IMR-90 (cell line): ENCODE measurements at regions of chr17 and their contacts with region 1.

Region 1: GRCh38 chr17:4143563-4144421 is 795 bp downstream of the CYB5D2 start:
- DNase-seq: peak; percentile 92
- ATAC-seq: peak; percentile 73
- H3K4me3 ChIP-seq: peak overlapping the region; percentile 87
- H3K27ac ChIP-seq: peak overlapping the region; percentile 96
- H3K4me1 ChIP-seq: peaks cover 4% of the 10 kb centered on the region
- H3K27me3 ChIP-seq: no peaks in the 10 kb centered on the region
- CTCF ChIP-seq: no peak
- POLR2A ChIP-seq: peak; percentile 88
- RAD21 ChIP-seq: no peak

Region 2: DNA sequence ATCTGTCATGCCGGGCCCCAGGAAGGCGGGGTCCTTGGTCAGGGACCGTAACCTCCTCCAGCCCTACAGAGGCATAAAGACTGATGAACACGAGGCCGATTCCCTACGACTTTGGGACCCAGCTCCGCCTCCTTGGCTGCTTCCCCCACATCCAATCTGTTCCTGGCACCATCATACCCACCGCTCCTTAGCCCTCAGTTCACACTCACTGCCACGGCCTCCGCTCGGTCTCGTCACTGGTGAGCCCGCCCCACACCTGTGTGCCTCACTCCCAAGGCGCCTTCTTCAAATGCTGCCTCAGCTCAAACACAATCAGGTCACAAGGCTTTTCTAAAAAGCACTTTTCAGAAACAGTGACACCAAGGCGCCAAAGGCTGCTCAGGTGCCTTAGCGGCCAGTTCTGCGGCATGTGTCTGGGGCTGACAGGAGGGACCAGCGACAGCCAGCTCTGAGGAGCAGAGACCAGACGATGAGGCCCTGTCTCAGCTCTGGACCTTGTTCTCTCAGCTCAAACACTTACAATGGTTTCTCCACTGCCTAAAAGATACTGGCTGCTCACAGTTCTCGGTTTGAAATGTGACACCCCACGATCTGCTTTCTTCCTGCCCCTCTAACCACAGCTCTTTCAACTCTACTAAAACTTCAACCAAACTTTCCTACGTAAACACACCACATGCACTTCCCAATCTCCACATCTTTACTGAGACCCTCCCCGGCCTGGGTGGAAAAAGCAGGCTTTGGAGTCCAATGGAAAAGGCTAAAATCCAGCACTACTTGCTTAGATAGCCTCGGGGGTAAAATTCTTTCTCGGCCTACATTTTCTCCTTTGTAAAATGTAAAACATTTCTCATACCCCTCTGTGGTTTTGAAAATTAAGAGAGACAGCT is 32.4 kb after region 1 on chr17:
- CTCF ChIA-PET with region 1: no interaction called
- POLR2A ChIA-PET with region 1: no interaction called
- dilution Hi-C with region 1: no loop called
- in situ Hi-C with region 1: no loop called
- intact Hi-C with region 1: no loop called
- DNase-seq: peak; percentile 45
- ATAC-seq: peak; percentile 81
- H3K4me3 ChIP-seq: no peak overlapping the region
- H3K27ac ChIP-seq: no peak overlapping the region
- H3K4me1 ChIP-seq: no peaks in the 10 kb centered on the region
- H3K27me3 ChIP-seq: no peaks in the 10 kb centered on the region
- CTCF ChIP-seq: no peak
- POLR2A ChIP-seq: no peak
- RAD21 ChIP-seq: no peak

Region 3: DNA sequence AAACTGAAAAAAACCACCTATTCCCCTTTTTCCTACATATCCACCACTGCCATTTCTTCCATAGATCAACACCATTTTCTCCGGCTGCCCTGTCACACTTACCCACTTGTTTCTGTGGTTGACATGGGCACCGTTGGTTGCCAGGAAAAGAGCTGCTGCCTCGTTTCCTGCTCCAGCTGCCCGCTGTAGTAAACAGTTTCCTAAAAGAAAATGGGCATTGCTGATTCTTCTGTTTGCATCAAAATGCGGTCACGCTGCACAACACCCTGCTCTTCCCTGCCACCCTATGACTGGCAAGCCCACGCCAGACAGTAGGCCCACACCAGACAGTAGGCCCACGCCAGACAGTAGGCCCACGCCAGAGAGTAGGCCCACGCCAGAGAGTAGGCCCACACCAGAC is 45.5 kb after region 1 on chr17:
- CTCF ChIA-PET with region 1: no interaction called
- POLR2A ChIA-PET with region 1: no interaction called
- dilution Hi-C with region 1: no loop called
- in situ Hi-C with region 1: no loop called
- intact Hi-C with region 1: no loop called
- DNase-seq: no peak
- ATAC-seq: no peak
- H3K4me3 ChIP-seq: no peak overlapping the region
- H3K27ac ChIP-seq: no peak overlapping the region
- H3K4me1 ChIP-seq: no peaks in the 10 kb centered on the region
- H3K27me3 ChIP-seq: no peaks in the 10 kb centered on the region
- CTCF ChIP-seq: no peak
- POLR2A ChIP-seq: no peak
- RAD21 ChIP-seq: no peak

Region 4: GRCh38 chr17:4340914-4341615 is 197.3 kb after region 1 on chr17:
- CTCF ChIA-PET with region 1: no interaction called
- POLR2A ChIA-PET with region 1: interaction called, 20 read pairs
- dilution Hi-C with region 1: no loop called
- in situ Hi-C with region 1: no loop called
- intact Hi-C with region 1: no loop called
- DNase-seq: peak; percentile 55
- ATAC-seq: peak; percentile 65
- H3K4me3 ChIP-seq: no peak overlapping the region
- H3K27ac ChIP-seq: no peak overlapping the region
- H3K4me1 ChIP-seq: peaks cover 9% of the 10 kb centered on the region
- H3K27me3 ChIP-seq: no peaks in the 10 kb centered on the region
- CTCF ChIP-seq: no peak
- POLR2A ChIP-seq: no peak
- RAD21 ChIP-seq: no peak